Activated CD4-positive, alpha-beta memory T cell treated with anti-CD3 and anti-CD28 coated beads for 36 hours (primary cell): ENCODE measurements at regions of chr1 and their contacts with region 1.

Region 1: GRCh38 chr1:74771913-74772515 is 39.1 kb downstream of the TYW3 start:
- DNase-seq: no peak
- H3K4me3 Mint-ChIP-seq: no peak overlapping the region
- H3K27ac Mint-ChIP-seq: no peak overlapping the region
- H3K4me1 Mint-ChIP-seq: no peaks in the 10 kb centered on the region
- H3K27me3 Mint-ChIP-seq: peaks cover 10% of the 10 kb centered on the region

Region 2: DNA sequence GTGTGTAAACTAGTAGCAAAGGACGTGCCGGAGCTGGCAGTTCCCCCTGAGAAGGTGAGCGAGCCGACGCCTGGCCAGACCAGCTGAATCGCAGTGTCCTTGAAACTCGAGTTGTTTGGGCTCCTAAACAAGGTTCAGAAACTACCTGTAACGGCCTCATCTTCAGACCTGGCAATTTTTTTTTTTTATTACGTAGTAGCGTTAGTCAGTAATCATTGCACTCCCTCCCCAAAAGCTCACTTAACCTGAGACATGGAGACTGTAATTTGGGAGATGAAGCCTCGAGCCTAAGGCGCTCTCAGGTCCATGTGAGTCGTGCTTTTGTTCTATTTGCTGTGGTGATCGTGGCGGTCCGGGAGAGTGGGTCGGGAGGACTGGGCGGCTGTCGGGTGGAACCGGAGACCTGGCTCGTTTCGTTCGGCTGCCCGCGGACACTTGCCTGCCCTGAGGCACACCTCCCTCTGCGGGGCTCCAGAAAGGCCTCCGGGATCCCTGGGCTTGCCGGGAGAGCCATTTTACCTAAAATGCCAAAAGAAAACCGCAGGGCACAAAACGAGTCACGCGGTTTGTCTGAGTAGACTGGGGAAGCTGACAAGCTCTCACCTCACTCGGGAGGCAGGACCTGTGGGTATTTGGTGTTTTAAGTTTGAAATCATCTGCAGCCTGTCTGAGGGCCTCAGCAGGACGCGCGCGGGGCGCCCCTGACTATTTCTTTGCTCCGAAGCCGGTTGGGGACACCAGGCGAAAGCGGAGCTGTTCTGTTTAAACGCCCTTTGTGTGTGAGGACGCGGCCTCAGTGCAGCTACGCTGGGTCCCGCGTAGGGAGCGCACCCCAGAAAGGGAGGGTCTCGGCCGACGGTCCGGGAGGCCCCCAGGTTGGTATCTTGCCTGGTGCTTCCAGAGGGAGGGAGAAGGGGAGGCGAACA is 362.9 kb after region 1 on chr1:
- CTCF ChIA-PET with region 1: no interaction called
- POLR2A ChIA-PET with region 1: no interaction called
- intact Hi-C with region 1: loop called (anchors 5 kb)
- DNase-seq: peak; percentile 36
- H3K4me3 Mint-ChIP-seq: peak overlapping the region; percentile 65
- H3K27ac Mint-ChIP-seq: no peak overlapping the region
- H3K4me1 Mint-ChIP-seq: peaks cover 22% of the 10 kb centered on the region
- H3K27me3 Mint-ChIP-seq: peaks cover 76% of the 10 kb centered on the region

Region 3: GRCh38 chr1:75203415-75204277 is 431.6 kb after region 1 on chr1:
- CTCF ChIA-PET with region 1: interaction called, 24 read pairs
- POLR2A ChIA-PET with region 1: no interaction called
- intact Hi-C with region 1: loop called (anchors 1 kb)
- DNase-seq: no peak
- H3K4me3 Mint-ChIP-seq: no peak overlapping the region
- H3K27ac Mint-ChIP-seq: no peak overlapping the region
- H3K4me1 Mint-ChIP-seq: no peaks in the 10 kb centered on the region
- H3K27me3 Mint-ChIP-seq: no peaks in the 10 kb centered on the region

Region 4: GRCh38 chr1:75632350-75632949 is 860.4 kb after region 1 on chr1:
- CTCF ChIA-PET with region 1: interaction called, 3 read pairs
- POLR2A ChIA-PET with region 1: no interaction called
- intact Hi-C with region 1: loop called (anchors 1 kb)
- DNase-seq: no peak
- H3K4me3 Mint-ChIP-seq: no peak overlapping the region
- H3K27ac Mint-ChIP-seq: no peak overlapping the region
- H3K4me1 Mint-ChIP-seq: no peaks in the 10 kb centered on the region
- H3K27me3 Mint-ChIP-seq: peaks cover 12% of the 10 kb centered on the region

Region 5: GRCh38 chr1:75724472-75725022 is 952.5 kb after region 1 on chr1 and contains the start of gene ACADM:
- CTCF ChIA-PET with region 1: no interaction called
- POLR2A ChIA-PET with region 1: no interaction called
- intact Hi-C with region 1: loop called (anchors 10 kb)
- DNase-seq: peak; percentile 91
- H3K4me3 Mint-ChIP-seq: peak within 1 kb of the TSS; percentile 100
- H3K27ac Mint-ChIP-seq: peak within 1 kb of the TSS; percentile 99
- H3K4me1 Mint-ChIP-seq: peaks cover 28% of the 10 kb centered on the region
- H3K27me3 Mint-ChIP-seq: no peaks in the 10 kb centered on the region
- total RNA-seq, gene ACADM: 60.3 to 60.9 TPM

Region 6: GRCh38 chr1:75785983-75786853 is 1014.2 kb after region 1 on chr1 and contains the start of gene RABGGTB:
- CTCF ChIA-PET with region 1: interaction called, 5 read pairs
- POLR2A ChIA-PET with region 1: interaction called, 3 read pairs
- intact Hi-C with region 1: loop called (anchors 10 kb)
- DNase-seq: peak; percentile 96
- H3K4me3 Mint-ChIP-seq: peak within 1 kb of the TSS; percentile 99
- H3K27ac Mint-ChIP-seq: peak within 1 kb of the TSS; percentile 97
- H3K4me1 Mint-ChIP-seq: peaks cover 28% of the 10 kb centered on the region
- H3K27me3 Mint-ChIP-seq: no peaks in the 10 kb centered on the region
- total RNA-seq, gene RABGGTB: 158 to 170 TPM